PC-9 (cell line): ENCODE measurements at regions of chr6 and their contacts with region 1.

Region 1: GRCh38 chr6:80622641-80623040 is 516.2 kb downstream of the BCKDHB start:
- DNase-seq: peak; percentile 80 to 88
- H3K4me3 ChIP-seq: no peak overlapping the region
- H3K27ac ChIP-seq: peak overlapping the region; percentile 60
- H3K4me1 ChIP-seq: peaks cover 12% of the 10 kb centered on the region
- H3K27me3 ChIP-seq: no peaks in the 10 kb centered on the region
- CTCF ChIP-seq: no peak

Region 2: GRCh38 chr6:80527552-80528052 is 95.0 kb before region 1 on chr6:
- CTCF ChIA-PET with region 1: no interaction called
- POLR2A ChIA-PET with region 1: no interaction called
- intact Hi-C with region 1: loop called (anchors 2 kb)
- DNase-seq: peak; percentile 24 to 91
- H3K4me3 ChIP-seq: peak overlapping the region; percentile 37; the same call in 1 of the 2 replicates
- H3K27ac ChIP-seq: peak overlapping the region; percentile 36
- H3K4me1 ChIP-seq: peaks cover 23% of the 10 kb centered on the region
- H3K27me3 ChIP-seq: no peaks in the 10 kb centered on the region
- CTCF ChIP-seq: no peak

Region 3: GRCh38 chr6:80638213-80639055 is 15.8 kb after region 1 on chr6:
- CTCF ChIA-PET with region 1: no interaction called
- POLR2A ChIA-PET with region 1: no interaction called
- intact Hi-C with region 1: loop called (anchors 2 kb)
- DNase-seq: peak; percentile 62 to 68
- H3K4me3 ChIP-seq: no peak overlapping the region
- H3K27ac ChIP-seq: 0 out of 2 replicates have a peak overlapping the region, but pooled peaks have one; percentile 39
- H3K4me1 ChIP-seq: no peaks in the 10 kb centered on the region
- H3K27me3 ChIP-seq: no peaks in the 10 kb centered on the region
- CTCF ChIP-seq: no peak

Region 4: DNA sequence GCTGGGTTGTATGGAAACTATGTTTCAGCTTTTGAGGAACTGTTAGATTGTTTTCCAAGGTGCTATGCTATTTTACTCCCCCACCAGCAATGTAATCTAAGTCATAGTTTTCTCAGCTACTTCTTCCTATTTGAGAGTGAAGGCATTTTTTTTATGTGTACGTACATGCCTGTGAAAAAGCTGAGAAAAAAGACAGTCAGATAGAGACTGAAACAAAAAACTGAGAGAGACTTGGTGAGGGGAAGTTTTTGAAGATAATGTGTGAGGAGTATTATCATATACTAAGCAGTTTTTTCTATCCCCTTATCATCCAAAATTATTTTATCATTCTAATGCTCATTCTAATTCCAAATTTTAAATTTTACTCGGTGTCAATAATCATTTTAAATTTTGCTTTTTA is 263.8 kb after region 1 on chr6:
- CTCF ChIA-PET with region 1: no interaction called
- POLR2A ChIA-PET with region 1: no interaction called
- intact Hi-C with region 1: no loop called
- DNase-seq: no peak
- H3K4me3 ChIP-seq: no peak overlapping the region
- H3K27ac ChIP-seq: no peak overlapping the region
- H3K4me1 ChIP-seq: no peaks in the 10 kb centered on the region
- H3K27me3 ChIP-seq: no peaks in the 10 kb centered on the region
- CTCF ChIP-seq: no peak